CD8-positive, alpha-beta memory T cell (primary cell): ENCODE measurements at regions of chr7 and their contacts with region 1.

Region 1: GRCh38 chr7:123748734-123749536 is at the start of gene WASL:
- DNase-seq: peak; percentile 79 to 90 (median 89)
- H3K4me3 ChIP-seq: peak within 1 kb of the TSS; percentile 85
- H3K4me3 Mint-ChIP-seq: peak within 1 kb of the TSS; percentile 88 to 99 (median 95)
- H3K27ac ChIP-seq: peak within 1 kb of the TSS; percentile 87
- H3K27ac Mint-ChIP-seq: peak within 1 kb of the TSS; percentile 91 to 97 (median 94)
- H3K4me1 ChIP-seq: peaks cover 36% of the 10 kb centered on the region
- H3K4me1 Mint-ChIP-seq: peaks cover 50 to 66% (median 66%) of the 10 kb centered on the region in 3 donors
- H3K27me3 ChIP-seq: no peaks in the 10 kb centered on the region
- H3K27me3 Mint-ChIP-seq: no peaks in the 10 kb centered on the region
- total RNA-seq, gene WASL: 7.3 to 7.4 TPM

Region 2: GRCh38 chr7:123343611-123344010 is 405.3 kb before region 1 on chr7:
- CTCF ChIA-PET with region 1: no interaction called
- POLR2A ChIA-PET with region 1: no interaction called
- DNase-seq: no peak
- H3K4me3 ChIP-seq: no peak overlapping the region
- H3K4me3 Mint-ChIP-seq: no peak overlapping the region
- H3K27ac ChIP-seq: no peak overlapping the region
- H3K27ac Mint-ChIP-seq: no peak overlapping the region
- H3K4me1 ChIP-seq: no peaks in the 10 kb centered on the region
- H3K4me1 Mint-ChIP-seq: no peaks in the 10 kb centered on the region
- H3K27me3 ChIP-seq: no peaks in the 10 kb centered on the region
- H3K27me3 Mint-ChIP-seq: no peaks in the 10 kb centered on the region

Region 3: DNA sequence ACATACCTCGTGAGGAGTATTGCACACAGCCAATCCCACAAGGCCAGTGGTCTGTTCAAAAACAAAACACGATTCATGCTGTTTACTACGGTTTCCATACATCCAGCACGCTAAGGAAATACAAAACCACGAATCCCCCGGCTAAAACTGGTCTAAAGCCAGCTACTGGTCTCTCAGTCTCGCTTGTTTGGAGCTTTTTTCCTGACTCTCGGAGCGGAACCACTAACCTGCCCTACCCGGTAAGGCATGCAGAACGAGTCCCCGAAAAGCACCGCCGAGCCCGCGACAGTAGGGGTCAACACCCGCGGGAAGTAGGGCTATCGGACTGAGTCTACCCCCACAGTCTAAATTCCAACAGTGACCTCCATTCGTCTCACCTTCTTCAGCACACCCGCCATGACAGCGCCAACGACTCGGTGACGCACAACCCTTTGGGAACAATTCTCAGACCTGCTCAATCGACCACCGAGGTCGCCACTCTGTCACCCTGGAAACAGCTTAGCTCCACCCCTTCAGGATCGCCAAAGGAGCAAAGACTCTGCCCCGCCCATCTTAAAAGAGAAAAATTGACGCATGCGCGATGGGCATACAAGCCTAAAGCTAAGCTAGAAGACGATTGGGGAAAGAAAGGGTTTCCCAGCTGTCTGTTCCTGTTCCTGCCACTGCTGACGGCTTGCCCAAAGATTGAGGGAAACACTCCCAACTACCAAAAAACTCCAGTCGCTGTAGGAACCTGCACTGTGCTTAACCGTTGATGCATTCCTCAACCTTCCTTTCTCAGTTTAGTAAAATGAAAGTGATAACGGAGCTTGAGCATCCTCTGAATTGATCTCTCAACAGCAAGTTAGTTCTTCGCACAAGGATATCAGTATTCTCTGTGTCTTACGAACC is 191.3 kb before region 1 on chr7 and contains the start of gene NDUFA5:
- CTCF ChIA-PET with region 1: interaction called, 5 read pairs
- POLR2A ChIA-PET with region 1: interaction called, 16 read pairs
- DNase-seq: peak; percentile 91 to 99 (median 97)
- H3K4me3 ChIP-seq: peak within 1 kb of the TSS; percentile 95
- H3K4me3 Mint-ChIP-seq: no peak within 1 kb of the TSS
- H3K27ac ChIP-seq: peak within 1 kb of the TSS; percentile 90
- H3K27ac Mint-ChIP-seq: no peak within 1 kb of the TSS
- H3K4me1 ChIP-seq: peaks cover 32% of the 10 kb centered on the region
- H3K4me1 Mint-ChIP-seq: peaks cover 13 to 14% (median 13%) of the 10 kb centered on the region in 3 donors
- H3K27me3 ChIP-seq: no peaks in the 10 kb centered on the region
- H3K27me3 Mint-ChIP-seq: peaks cover 0 to 3% of the 10 kb centered on the region in 2 donors
- total RNA-seq, gene NDUFA5: 61.3 to 66.3 TPM